Vagina (tissue), 2 donors: ENCODE measurements at regions of chr12 and their contacts with region 1.

Region 1: GRCh38 chr12:13023811-13024530 is 20.2 kb upstream of the FAM234B start:
- DNase-seq: no peak
- H3K4me3 ChIP-seq: no peak overlapping the region
- H3K27ac ChIP-seq: no peak overlapping the region
- H3K4me1 ChIP-seq: no peaks in the 10 kb centered on the region
- H3K27me3 ChIP-seq: no peaks in the 10 kb centered on the region
- CTCF ChIP-seq: no peak
- POLR2A ChIP-seq: no peak

Region 2: GRCh38 chr12:13233830-13234641 is 210.1 kb after region 1 on chr12:
- intact Hi-C with region 1: loop called (anchors 10 kb)
- DNase-seq: peak in 1 of 2 donors; percentile 82
- H3K4me3 ChIP-seq: no peak overlapping the region
- H3K27ac ChIP-seq: no peak overlapping the region
- H3K4me1 ChIP-seq: no peaks in the 10 kb centered on the region
- H3K27me3 ChIP-seq: no peaks in the 10 kb centered on the region
- CTCF ChIP-seq: peak; percentile 56 to 90 (median 68)
- POLR2A ChIP-seq: no peak